HepG2 (cell line): ENCODE measurements at regions of chr3 and their contacts with region 1.

Region 1: GRCh38 chr3:53709860-53710674 is 136.2 kb downstream of the CHDH start:
- DNase-seq: peak; percentile 50
- ATAC-seq: peak; percentile 95
- H3K4me3 ChIP-seq: no peak overlapping the region
- H3K27ac ChIP-seq: no peak overlapping the region
- H3K4me1 ChIP-seq: peaks cover 8% of the 10 kb centered on the region
- H3K27me3 ChIP-seq: no peaks in the 10 kb centered on the region; a peak in 1 of 5 replicates
- CTCF ChIP-seq: peak; percentile 91
- EP300 ChIP-seq: no peak
- POLR2A ChIP-seq: no peak
- RAD21 ChIP-seq: peak; percentile 89

Region 2: GRCh38 chr3:53195602-53196574 is 514.2 kb before region 1 on chr3:
- CTCF ChIA-PET with region 1: no interaction called
- POLR2A ChIA-PET with region 1: no interaction called
- in situ Hi-C with region 1: no loop called
- intact Hi-C with region 1: loop called (anchors 5 kb)
- DNase-seq: no peak
- ATAC-seq: peak; percentile 77
- H3K4me3 ChIP-seq: peak overlapping the region in 1 of 3 experiments; percentile 11; a peak in 2 of 6 replicates
- H3K27ac ChIP-seq: no peak overlapping the region
- H3K4me1 ChIP-seq: peaks cover 38% of the 10 kb centered on the region
- H3K27me3 ChIP-seq: no peaks in the 10 kb centered on the region
- CTCF ChIP-seq: peak; percentile 97
- EP300 ChIP-seq: no peak
- POLR2A ChIP-seq: no peak
- RAD21 ChIP-seq: peak; percentile 98

Region 3: GRCh38 chr3:53303957-53304356 is 406.1 kb before region 1 on chr3:
- CTCF ChIA-PET with region 1: interaction called, 7 read pairs
- POLR2A ChIA-PET with region 1: no interaction called
- in situ Hi-C with region 1: no loop called
- intact Hi-C with region 1: loop called (anchors 2 kb)
- DNase-seq: no peak
- ATAC-seq: no peak
- H3K4me3 ChIP-seq: no peak overlapping the region
- H3K27ac ChIP-seq: no peak overlapping the region
- H3K4me1 ChIP-seq: no peaks in the 10 kb centered on the region
- H3K27me3 ChIP-seq: no peaks in the 10 kb centered on the region
- CTCF ChIP-seq: no peak
- EP300 ChIP-seq: no peak
- POLR2A ChIP-seq: no peak
- RAD21 ChIP-seq: no peak

Region 4: GRCh38 chr3:53375019-53375418 is 335.0 kb before region 1 on chr3:
- CTCF ChIA-PET with region 1: interaction called, 28 read pairs
- POLR2A ChIA-PET with region 1: no interaction called
- in situ Hi-C with region 1: loop called (anchors 10 kb)
- intact Hi-C with region 1: no loop called
- DNase-seq: peak; percentile 69
- ATAC-seq: peak; percentile 99
- H3K4me3 ChIP-seq: no peak overlapping the region
- H3K27ac ChIP-seq: no peak overlapping the region
- H3K4me1 ChIP-seq: no peaks in the 10 kb centered on the region
- H3K27me3 ChIP-seq: no peaks in the 10 kb centered on the region
- CTCF ChIP-seq: peak; percentile 94
- EP300 ChIP-seq: no peak
- POLR2A ChIP-seq: no peak
- RAD21 ChIP-seq: peak; percentile 93

Region 5: DNA sequence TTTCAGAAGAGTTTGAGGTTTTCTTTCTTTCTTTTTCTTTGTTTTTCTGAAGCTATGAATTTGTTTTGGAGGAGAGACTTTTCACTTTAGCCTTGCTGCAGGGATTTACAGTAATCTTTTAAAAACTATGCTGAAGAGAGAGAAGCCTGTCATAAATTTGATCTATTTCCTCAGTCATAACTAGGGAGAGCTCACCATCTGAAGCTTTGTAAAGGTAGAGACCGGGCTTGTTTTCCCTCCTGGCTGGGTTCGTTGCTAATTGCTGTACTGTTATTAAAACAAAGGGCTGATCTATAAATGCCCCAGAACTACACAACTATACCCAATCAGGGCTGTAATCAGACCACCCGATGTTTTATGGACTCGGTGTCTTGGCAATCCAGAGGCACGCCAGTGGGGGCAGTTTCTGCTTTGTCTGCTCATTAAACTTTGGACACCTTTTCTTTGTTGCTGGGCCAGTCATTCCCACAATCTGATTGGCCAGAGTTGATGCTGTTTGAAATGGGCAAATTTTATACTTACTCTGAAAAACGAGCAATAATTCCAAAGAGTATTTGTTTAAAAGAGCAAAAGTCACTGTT is 51.4 kb before region 1 on chr3:
- CTCF ChIA-PET with region 1: no interaction called
- POLR2A ChIA-PET with region 1: no interaction called
- in situ Hi-C with region 1: no loop called
- intact Hi-C with region 1: no loop called
- DNase-seq: no peak
- ATAC-seq: no peak
- H3K4me3 ChIP-seq: no peak overlapping the region
- H3K27ac ChIP-seq: no peak overlapping the region
- H3K4me1 ChIP-seq: no peaks in the 10 kb centered on the region
- H3K27me3 ChIP-seq: no peaks in the 10 kb centered on the region
- CTCF ChIP-seq: no peak
- EP300 ChIP-seq: no peak
- POLR2A ChIP-seq: no peak
- RAD21 ChIP-seq: no peak

Region 6: GRCh38 chr3:53677413-53677812 is 32.7 kb before region 1 on chr3:
- CTCF ChIA-PET with region 1: interaction called, 7 read pairs
- POLR2A ChIA-PET with region 1: no interaction called
- in situ Hi-C with region 1: no loop called
- intact Hi-C with region 1: loop called (anchors 1 kb)
- DNase-seq: peak; percentile 33
- ATAC-seq: peak; percentile 96
- H3K4me3 ChIP-seq: no peak overlapping the region
- H3K27ac ChIP-seq: no peak overlapping the region
- H3K4me1 ChIP-seq: peaks cover 2% of the 10 kb centered on the region
- H3K27me3 ChIP-seq: no peaks in the 10 kb centered on the region
- CTCF ChIP-seq: peak; percentile 61
- EP300 ChIP-seq: no peak
- POLR2A ChIP-seq: no peak
- RAD21 ChIP-seq: no peak